ENCODE measurements at regions of chr4 and their contacts with region 1.

Region 1: DNA sequence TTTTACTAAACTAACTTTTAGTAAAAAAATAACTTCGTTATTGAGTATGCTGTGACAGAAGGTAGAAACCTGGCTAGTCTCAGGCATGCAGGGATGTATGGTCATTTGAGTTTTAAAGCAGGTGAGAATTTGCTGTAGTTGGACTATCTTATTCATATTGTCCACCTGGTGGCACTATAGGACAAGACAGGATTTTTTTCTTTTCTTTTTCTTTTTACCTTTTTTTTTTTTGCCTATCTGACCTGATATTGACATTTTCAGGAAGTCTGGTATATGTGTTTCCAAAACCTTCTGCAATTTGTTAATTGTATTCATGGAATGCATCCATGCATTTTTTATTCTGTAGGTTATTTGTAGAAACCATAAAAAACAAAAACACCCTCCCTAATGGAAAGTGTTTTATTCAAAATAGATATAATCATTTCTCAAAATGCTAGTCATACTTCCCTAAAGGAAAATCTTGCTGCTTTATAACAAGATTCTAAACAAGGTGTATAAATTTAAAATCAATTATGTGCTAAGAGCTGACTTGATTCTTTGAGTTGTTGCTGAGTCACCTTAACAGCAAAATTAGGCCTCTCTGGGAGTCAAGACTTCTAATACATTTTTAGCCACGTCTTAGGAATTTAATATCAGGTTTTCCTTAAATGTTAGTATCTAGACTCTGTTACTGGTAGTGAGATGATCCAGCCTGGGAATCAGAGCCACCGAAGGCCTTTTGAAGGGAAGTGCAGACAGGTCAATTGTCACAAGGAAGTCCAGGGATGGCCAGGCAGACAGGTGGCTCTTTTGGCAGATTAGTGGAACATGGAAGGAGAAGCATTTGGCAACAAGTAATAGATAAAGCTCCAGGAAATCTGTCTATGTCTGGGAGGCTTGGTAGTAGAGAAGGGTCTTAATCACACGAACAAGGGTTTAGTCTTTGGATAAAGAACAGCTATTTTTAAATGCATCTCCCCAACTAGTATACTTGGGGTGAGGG is 201.3 kb upstream of the GNPDA2 start:
- DNase-seq: no peak

Region 2: DNA sequence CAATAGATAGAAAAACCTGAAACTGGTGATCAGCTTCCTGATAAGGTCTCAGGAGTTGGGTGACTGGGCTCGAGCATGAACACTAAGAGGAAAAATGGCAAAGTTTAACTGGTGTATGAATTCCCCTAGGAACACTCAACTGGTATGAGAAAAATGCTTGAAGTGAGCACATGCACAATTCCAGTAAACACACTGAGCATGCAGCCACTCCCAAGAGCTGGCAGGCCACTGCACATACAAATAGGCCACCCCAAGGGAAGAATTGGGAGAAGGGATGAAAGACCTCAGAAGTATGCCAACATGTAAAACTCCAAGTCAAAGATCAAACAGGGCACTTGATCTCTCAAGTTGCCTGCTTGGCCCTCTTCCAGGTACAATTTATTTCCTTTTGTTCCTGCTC is 155.9 kb before region 1 on chr4:
- intact Hi-C with region 1: loop called (anchors 2 kb)
- DNase-seq: no peak

Region 3: GRCh38 chr4:45324455-45325417 is 397.0 kb after region 1 on chr4:
- intact Hi-C with region 1: loop called (anchors 10 kb)
- DNase-seq: no peak

Region 4: GRCh38 chr4:45442466-45442865 is 514.8 kb after region 1 on chr4:
- intact Hi-C with region 1: loop called (anchors 5 kb)
- DNase-seq: no peak

Region 5: GRCh38 chr4:46270986-46271596 is 1343.4 kb after region 1 on chr4:
- intact Hi-C with region 1: loop called (anchors 5 kb)
- DNase-seq: no peak